PC-9 (cell line): ENCODE measurements at regions of chr20 and their contacts with region 1.

Region 1: DNA sequence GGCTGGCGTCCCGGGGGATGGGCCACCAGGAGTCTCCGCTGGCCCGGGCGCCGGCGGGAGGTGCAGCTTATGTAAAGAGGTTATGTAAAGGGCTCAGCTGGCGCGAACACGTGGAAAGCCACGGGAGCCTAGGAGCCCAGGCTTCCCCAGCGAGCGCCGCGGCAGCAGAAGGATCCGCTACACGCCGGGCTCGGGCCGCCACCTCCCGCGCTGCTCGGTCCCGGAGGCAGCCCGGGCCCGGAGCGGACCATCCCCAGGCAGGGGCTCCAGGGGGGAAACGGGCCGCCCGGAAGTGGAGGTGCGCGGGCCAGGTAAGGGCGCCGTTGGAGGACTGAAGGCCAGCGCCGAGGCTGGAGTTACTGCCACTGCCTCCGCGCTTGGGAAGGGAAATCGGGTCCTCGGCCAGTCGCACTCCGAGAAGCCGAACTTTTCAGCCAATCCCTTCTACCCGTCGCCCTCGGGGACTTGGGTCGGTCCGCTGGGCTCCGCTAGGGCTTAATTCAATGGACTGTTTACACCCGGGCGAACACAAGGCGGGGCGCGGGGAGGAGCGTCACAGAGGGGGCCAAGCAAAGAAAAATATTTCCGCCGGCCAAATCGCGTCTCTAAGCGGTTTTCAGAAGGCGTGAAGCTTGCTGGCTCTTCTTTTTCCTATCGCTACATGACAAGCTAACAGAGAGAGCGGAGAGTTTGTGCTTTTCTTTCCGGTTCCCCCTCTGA is 398 bp downstream of the STK35 start:
- DNase-seq: peak; percentile 79 to 89
- H3K4me3 ChIP-seq: peak overlapping the region; percentile 82
- H3K27ac ChIP-seq: peak overlapping the region; percentile 97
- H3K4me1 ChIP-seq: peaks cover 30% of the 10 kb centered on the region
- H3K27me3 ChIP-seq: no peaks in the 10 kb centered on the region
- CTCF ChIP-seq: no peak

Region 2: DNA sequence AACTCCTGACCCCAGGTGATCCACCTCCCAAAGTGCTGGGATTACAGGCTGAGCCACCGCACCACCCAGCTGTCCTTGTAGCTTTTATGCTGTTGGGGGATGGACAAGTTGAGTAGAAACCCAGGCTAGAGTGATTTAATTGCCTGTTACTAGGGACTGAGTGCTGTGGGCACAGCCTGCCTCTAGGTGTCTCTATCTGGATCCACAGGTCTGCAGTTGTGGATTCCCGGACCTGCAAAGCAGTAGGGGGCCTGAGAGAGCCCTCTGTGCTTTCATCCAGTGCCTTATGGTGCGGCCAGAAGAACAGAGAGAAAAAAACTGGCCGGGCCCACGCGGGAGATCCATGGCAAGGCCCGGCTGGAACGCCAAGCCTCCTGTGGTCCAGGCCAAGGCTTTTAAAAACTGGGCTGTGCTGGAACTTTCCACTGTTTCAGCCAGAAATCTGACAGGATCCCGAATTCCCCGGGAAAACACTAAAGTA is 201.7 kb before region 1 on chr20:
- CTCF ChIA-PET with region 1: interaction called, 4 read pairs
- POLR2A ChIA-PET with region 1: interaction called, 19 read pairs
- intact Hi-C with region 1: no loop called
- DNase-seq: peak; percentile 27 to 54
- H3K4me3 ChIP-seq: no peak overlapping the region
- H3K27ac ChIP-seq: no peak overlapping the region
- H3K4me1 ChIP-seq: peaks cover 7% of the 10 kb centered on the region
- H3K27me3 ChIP-seq: no peaks in the 10 kb centered on the region
- CTCF ChIP-seq: peak; percentile 60; the same call in 1 of the 2 replicates

Region 3: DNA sequence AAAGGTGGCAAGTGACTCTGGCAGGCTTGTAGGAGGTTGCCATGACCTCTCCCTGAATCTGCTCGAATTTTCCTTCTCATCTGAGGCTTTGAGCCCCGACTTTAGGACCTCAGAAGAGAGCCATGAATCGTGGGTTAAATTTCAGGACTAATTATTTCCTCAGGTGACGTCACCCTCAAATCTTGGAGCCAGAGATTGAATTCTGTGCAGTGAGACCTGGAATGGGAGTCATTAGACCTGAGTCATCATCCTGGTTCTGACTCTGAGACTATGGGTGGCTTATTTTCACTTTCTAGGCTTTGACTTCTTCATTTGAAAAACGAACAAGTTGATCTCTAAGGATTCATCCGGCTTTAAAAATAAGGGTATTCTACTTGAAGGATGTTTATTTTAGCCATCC is 59.6 kb before region 1 on chr20:
- CTCF ChIA-PET with region 1: no interaction called
- POLR2A ChIA-PET with region 1: no interaction called
- intact Hi-C with region 1: no loop called
- DNase-seq: no peak
- H3K4me3 ChIP-seq: no peak overlapping the region
- H3K27ac ChIP-seq: no peak overlapping the region
- H3K4me1 ChIP-seq: no peaks in the 10 kb centered on the region
- H3K27me3 ChIP-seq: peaks cover 93% of the 10 kb centered on the region
- CTCF ChIP-seq: no peak

Region 4: GRCh38 chr20:2128542-2128941 is 26.5 kb after region 1 on chr20:
- CTCF ChIA-PET with region 1: no interaction called
- POLR2A ChIA-PET with region 1: interaction called, 30 read pairs
- intact Hi-C with region 1: no loop called
- DNase-seq: no peak
- H3K4me3 ChIP-seq: no peak overlapping the region
- H3K27ac ChIP-seq: no peak overlapping the region
- H3K4me1 ChIP-seq: peaks cover 40% of the 10 kb centered on the region
- H3K27me3 ChIP-seq: no peaks in the 10 kb centered on the region
- CTCF ChIP-seq: no peak

Region 5: GRCh38 chr20:2151858-2152281 is 49.8 kb after region 1 on chr20:
- CTCF ChIA-PET with region 1: no interaction called
- POLR2A ChIA-PET with region 1: no interaction called
- intact Hi-C with region 1: loop called (anchors 5 kb)
- DNase-seq: peak; percentile 56 to 63
- H3K4me3 ChIP-seq: no peak overlapping the region
- H3K27ac ChIP-seq: no peak overlapping the region
- H3K4me1 ChIP-seq: peaks cover 11% of the 10 kb centered on the region; the same call in 1 of the 2 replicates
- H3K27me3 ChIP-seq: no peaks in the 10 kb centered on the region
- CTCF ChIP-seq: no peak

Region 6: DNA sequence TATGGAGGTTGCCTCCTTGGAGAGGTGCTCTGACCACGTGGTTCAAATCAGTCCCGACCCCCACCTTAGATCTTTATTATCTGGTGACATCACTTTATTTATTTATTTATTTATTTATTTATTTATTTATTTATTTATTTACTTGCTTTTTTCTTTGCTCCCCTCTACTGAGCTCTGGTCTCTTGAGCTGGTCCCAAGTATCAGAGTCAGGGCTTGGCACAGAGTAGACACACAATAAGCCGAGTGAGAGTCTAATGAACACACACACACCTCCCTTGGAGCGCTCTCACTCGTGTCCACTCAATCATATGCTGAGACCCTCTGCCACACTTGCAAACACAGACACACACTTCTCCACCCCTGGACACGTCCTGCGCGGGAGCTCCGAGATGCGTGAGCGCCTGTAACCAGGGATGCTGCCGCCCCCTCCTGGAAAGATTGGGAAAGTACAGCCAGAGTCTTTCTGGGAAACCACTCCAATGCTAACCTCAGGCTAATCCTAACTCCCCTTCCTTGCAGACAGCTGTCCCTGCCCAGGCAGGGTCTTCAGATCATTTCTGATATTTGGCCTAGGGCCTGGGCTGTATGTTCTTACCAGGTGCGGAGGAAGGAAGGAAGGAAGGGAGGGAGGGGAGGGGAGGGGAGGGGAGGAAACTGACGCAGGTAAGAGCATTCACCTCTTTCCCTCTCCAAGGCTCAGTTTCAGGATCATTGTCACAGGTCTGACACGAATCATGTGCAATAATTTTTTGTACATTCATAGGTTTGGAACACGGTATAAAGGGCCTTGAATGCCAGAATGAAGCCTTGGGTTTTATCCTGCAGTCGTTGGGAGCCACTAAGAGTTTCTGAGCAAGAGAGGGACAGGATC is 70.5 kb after region 1 on chr20:
- CTCF ChIA-PET with region 1: no interaction called
- POLR2A ChIA-PET with region 1: interaction called, 9 read pairs
- intact Hi-C with region 1: loop called (anchors 2 kb)
- DNase-seq: peak in 1 of 2 experiments; percentile 63
- H3K4me3 ChIP-seq: no peak overlapping the region
- H3K27ac ChIP-seq: no peak overlapping the region
- H3K4me1 ChIP-seq: no peaks in the 10 kb centered on the region
- H3K27me3 ChIP-seq: peaks cover 11% of the 10 kb centered on the region; the same call in 1 of the 2 replicates
- CTCF ChIP-seq: peak; percentile 97